Left colon (tissue), 2 donors: ENCODE measurements at regions of chr4 and their contacts with region 1.

Region 1: GRCh38 chr4:37802068-37802666 is 24.3 kb upstream of the PGM2 start:
- DNase-seq: peak; percentile 55 to 74
- ATAC-seq: peak; percentile 95

Region 2: GRCh38 chr4:37567841-37568240 is 234.3 kb before region 1 on chr4:
- intact Hi-C with region 1: no loop called
- DNase-seq: no peak
- ATAC-seq: no peak

Region 3: GRCh38 chr4:37977471-37978247 is 175.5 kb after region 1 on chr4:
- intact Hi-C with region 1: loop called in 1 of 2 experiments (anchors 10 kb)
- DNase-seq: peak; percentile 78 to 85
- ATAC-seq: peak; percentile 75